ENCODE measurements at regions of chr16 and their contacts with region 1.

Region 1: DNA sequence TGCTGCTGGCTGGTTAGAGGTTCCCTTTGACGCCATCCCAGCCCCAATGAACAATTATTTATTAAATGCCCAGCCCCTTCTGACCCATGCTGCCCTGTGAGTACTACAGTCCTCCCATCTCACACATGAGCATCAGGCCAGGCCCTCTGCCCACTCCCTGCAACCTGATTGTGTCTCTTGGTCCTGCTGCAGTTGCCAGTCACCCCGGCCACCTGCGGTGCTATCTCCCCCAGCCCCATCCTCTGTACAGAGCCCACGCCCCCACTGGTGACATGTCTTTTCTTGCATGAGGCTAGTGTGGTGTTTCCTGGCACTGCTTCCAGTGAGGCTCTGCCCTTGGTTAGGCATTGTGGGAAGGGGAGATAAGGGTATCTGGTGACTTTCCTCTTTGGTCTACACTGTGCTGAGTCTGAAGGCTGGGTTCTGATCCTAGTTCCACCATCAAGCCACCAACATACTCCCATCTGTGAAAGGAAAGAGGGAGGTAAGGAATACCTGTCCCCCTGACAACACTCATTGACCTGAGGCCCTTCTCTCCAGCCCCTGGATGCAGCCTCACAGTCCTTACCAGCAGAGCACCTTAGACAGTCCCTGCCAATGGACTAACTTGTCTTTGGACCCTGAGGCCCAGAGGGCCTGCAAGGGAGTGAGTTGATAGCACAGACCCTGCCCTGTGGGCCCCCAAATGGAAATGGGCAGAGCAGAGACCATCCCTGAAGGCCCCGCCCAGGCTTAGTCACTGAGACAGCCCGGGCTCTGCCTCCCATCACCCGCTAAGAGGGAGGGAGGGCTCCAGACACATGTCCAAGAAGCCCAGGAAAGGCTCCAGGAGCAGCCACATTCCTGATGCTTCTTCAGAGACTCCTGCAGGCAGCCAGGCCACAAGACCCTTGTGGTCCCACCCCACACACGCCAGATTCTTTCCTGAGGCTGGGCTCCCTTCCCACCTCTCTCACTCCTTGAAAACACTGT is 11.3 kb downstream of the CX3CL1 start:
- DNase-seq: peak in 1 of 2 donors; percentile 77
- H3K4me3 ChIP-seq: no peak overlapping the region
- H3K27ac ChIP-seq: peak overlapping the region; percentile 65 to 75
- H3K4me1 ChIP-seq: peaks cover 0 to 33% of the 10 kb centered on the region in 2 donors
- H3K27me3 ChIP-seq: no peaks in the 10 kb centered on the region
- CTCF ChIP-seq: no peak

Region 2: GRCh38 chr16:57416122-57416509 is 32.6 kb after region 1 on chr16:
- intact Hi-C with region 1: loop called (anchors 2 kb)
- DNase-seq: no peak
- H3K4me3 ChIP-seq: no peak overlapping the region
- H3K27ac ChIP-seq: no peak overlapping the region
- H3K4me1 ChIP-seq: peaks cover 3 to 26% of the 10 kb centered on the region in 2 donors
- H3K27me3 ChIP-seq: no peaks in the 10 kb centered on the region
- CTCF ChIP-seq: no peak